A673 (cell line): ENCODE measurements at regions of chr11 and their contacts with region 1.

Region 1: GRCh38 chr11:34492806-34493414 is 20.7 kb downstream of the ELF5 start:
- DNase-seq: peak; percentile 91
- H3K4me3 ChIP-seq: no peak overlapping the region
- H3K27ac ChIP-seq: no peak overlapping the region
- H3K4me1 ChIP-seq: no peaks in the 10 kb centered on the region
- H3K27me3 ChIP-seq: no peaks in the 10 kb centered on the region
- CTCF ChIP-seq: peak; percentile 99

Region 2: GRCh38 chr11:33557201-33557600 is 935.7 kb before region 1 on chr11:
- CTCF ChIA-PET with region 1: no interaction called
- POLR2A ChIA-PET with region 1: no interaction called
- intact Hi-C with region 1: no loop called
- DNase-seq: no peak
- H3K4me3 ChIP-seq: no peak overlapping the region
- H3K27ac ChIP-seq: no peak overlapping the region
- H3K4me1 ChIP-seq: no peaks in the 10 kb centered on the region
- H3K27me3 ChIP-seq: peaks cover under 1% of the 10 kb centered on the region
- CTCF ChIP-seq: no peak

Region 3: GRCh38 chr11:33835143-33835878 is 657.6 kb before region 1 on chr11:
- CTCF ChIA-PET with region 1: no interaction called
- POLR2A ChIA-PET with region 1: no interaction called
- intact Hi-C with region 1: loop called (anchors 5 kb)
- DNase-seq: peak; percentile 89
- H3K4me3 ChIP-seq: peak overlapping the region; percentile 24
- H3K27ac ChIP-seq: peak overlapping the region; percentile 57
- H3K4me1 ChIP-seq: peaks cover 39% of the 10 kb centered on the region
- H3K27me3 ChIP-seq: no peaks in the 10 kb centered on the region
- CTCF ChIP-seq: peak; percentile 86

Region 4: GRCh38 chr11:34427186-34427805 is 65.6 kb before region 1 on chr11:
- CTCF ChIA-PET with region 1: no interaction called
- POLR2A ChIA-PET with region 1: interaction called, 13 read pairs
- intact Hi-C with region 1: no loop called
- DNase-seq: peak; percentile 86
- H3K4me3 ChIP-seq: no peak overlapping the region
- H3K27ac ChIP-seq: peak overlapping the region; percentile 45
- H3K4me1 ChIP-seq: peaks cover 27% of the 10 kb centered on the region
- H3K27me3 ChIP-seq: no peaks in the 10 kb centered on the region
- CTCF ChIP-seq: no peak

Region 5: GRCh38 chr11:34696862-34697261 is 204.0 kb after region 1 on chr11:
- CTCF ChIA-PET with region 1: no interaction called
- POLR2A ChIA-PET with region 1: no interaction called
- intact Hi-C with region 1: no loop called
- DNase-seq: no peak
- H3K4me3 ChIP-seq: no peak overlapping the region
- H3K27ac ChIP-seq: no peak overlapping the region
- H3K4me1 ChIP-seq: no peaks in the 10 kb centered on the region
- H3K27me3 ChIP-seq: peaks cover 11% of the 10 kb centered on the region
- CTCF ChIP-seq: no peak